Dendritic cell treated with granulocyte-macrophage colony-stimulating factor and Interleukin-4, amounts not matched to agents 40 ng/mL and 50 ng/mL, for 4 days (primary cell): ENCODE measurements at regions of chr3 and their contacts with region 1.

Region 1: DNA sequence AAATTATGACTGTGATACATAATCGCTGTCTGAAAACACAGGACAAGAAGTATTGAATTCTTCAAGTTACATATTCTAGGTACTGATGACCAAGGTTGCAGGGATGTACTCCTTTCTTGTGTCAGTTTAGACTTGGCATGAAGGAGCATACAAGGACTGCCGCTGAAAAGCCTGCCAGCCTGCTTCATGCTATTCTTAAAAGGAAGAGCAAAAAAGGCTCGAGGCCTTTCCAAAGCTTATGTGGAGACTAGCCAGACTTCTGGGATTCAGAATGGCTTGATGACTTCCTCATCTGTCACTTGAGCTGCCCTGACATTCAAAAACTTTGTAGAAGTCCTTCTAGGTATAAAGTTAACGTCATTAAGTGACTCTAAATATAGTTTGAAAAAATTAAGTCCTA is 92.0 kb downstream of the CADM2 start:
- H3K4me3 Mint-ChIP-seq: no peak overlapping the region
- H3K27ac Mint-ChIP-seq: no peak overlapping the region
- H3K4me1 Mint-ChIP-seq: no peaks in the 10 kb centered on the region
- H3K27me3 Mint-ChIP-seq: no peaks in the 10 kb centered on the region

Region 2: DNA sequence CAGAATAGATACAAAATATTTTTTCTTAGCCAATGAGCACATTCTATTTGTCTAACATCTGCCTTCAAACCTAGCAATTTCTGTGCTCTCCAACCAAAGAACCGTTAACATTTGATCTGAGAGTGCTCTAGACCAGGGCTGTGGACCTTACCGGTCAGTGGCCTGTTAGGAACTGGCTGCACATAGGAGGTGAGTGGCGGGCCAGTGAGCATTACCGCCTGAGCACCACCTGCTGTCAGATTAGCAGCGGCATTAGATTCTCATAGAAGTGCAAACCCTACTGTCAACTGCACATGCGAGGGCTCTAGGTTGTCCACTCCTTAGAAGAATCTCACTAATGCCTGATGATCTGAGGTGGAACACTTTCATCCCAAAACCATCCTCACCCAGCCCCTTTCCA is 39.7 kb after region 1 on chr3:
- intact Hi-C with region 1: loop called (anchors 5 kb)
- H3K4me3 Mint-ChIP-seq: no peak overlapping the region
- H3K27ac Mint-ChIP-seq: no peak overlapping the region
- H3K4me1 Mint-ChIP-seq: no peaks in the 10 kb centered on the region
- H3K27me3 Mint-ChIP-seq: no peaks in the 10 kb centered on the region